Mammary epithelial cell (primary cell): ENCODE measurements at regions of chr16 and their contacts with region 1.

Region 1: DNA sequence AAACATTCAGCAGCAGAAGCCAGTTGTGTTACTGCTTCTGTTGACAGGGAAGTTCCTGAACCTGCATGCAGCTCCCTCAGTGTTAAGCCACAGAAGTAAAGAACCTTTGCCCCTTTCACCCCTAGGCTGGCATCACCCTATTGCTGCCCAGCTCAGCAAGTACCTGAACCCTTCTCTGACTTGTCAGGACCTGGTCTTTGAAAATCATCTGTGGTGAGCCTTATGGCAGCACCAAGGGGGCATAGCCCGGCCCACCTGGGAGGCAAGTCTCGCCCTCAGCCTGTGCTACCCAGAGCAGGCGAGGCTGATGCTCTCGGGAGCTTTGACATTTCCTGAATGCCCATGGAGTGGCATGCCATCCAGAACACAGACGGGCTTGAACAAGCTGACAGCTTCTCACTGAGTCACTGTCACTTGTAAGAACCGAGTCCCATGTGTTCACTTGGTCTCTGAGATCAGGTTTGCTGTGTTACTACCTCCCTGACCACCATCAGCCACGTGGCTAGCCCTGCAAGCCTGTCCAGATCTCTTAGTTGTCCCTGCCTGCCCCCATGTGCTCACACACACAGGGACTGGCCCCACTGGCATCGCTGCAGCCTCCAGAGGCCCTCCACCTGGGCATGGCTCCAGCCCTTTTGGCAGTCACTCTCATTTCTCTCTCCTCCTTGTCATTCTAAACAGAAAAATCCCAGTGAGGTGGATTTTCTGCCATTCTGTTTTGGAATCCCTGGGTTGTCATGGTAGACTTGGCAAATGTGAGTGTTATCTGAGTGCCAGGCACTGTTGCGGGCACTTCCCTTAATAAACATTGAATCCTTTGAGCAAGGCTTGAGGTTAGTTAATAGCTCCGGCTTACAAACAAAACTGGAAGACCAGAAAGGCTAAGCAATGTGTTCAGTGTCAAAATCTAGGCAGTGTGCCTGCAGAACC is 2.9 kb upstream of the CARMIL2 start:
- DNase-seq: peak; percentile 52
- H3K4me3 ChIP-seq: no peak overlapping the region
- H3K27ac ChIP-seq: no peak overlapping the region
- H3K4me1 ChIP-seq: peaks cover 12% of the 10 kb centered on the region
- H3K27me3 ChIP-seq: no peaks in the 10 kb centered on the region
- CTCF ChIP-seq: peak in 1 of 2 donors; percentile 10

Region 2: DNA sequence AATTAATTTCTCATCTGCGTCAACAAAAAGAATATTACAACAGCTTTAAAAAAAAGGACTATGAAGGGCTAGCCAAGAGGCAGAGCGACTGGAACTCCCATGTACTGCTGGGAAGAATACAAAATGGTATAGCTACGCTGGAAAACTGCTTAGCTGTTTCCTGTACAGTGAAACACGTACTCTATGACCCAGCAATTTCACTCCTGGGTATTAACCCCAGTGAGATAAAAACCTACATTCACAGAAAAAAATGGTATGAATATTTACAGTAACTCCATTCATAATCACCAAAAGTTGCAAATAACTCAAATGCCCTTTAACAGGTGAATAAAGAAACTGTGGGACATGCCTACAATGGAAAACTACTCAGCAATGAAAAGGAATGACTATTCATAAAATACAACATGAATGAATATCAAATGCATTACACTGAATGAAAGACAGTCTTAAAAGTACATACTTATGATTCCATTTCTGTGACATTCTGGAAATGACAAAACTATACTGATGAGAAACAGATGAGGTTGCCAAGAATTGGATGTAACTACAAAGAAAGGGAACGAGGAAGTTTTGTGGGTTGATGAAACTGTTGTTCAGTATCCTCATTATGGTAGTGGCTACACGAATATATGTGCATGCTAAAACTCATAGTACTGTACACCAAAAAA is 973.1 kb before region 1 on chr16:
- CTCF ChIA-PET with region 1: no interaction called
- dilution Hi-C with region 1: no loop called
- in situ Hi-C with region 1: no loop called
- intact Hi-C with region 1: no loop called
- DNase-seq: no peak
- H3K4me3 ChIP-seq: no peak overlapping the region
- H3K27ac ChIP-seq: no peak overlapping the region
- H3K4me1 ChIP-seq: no peaks in the 10 kb centered on the region
- H3K27me3 ChIP-seq: no peaks in the 10 kb centered on the region
- CTCF ChIP-seq: no peak

Region 3: GRCh38 chr16:67546761-67547422 is 95.2 kb before region 1 on chr16:
- CTCF ChIA-PET with region 1: interaction called, 3 read pairs
- dilution Hi-C with region 1: no loop called
- in situ Hi-C with region 1: no loop called
- intact Hi-C with region 1: loop called (anchors 1 kb)
- DNase-seq: peak; percentile 45
- H3K4me3 ChIP-seq: no peak overlapping the region
- H3K27ac ChIP-seq: no peak overlapping the region
- H3K4me1 ChIP-seq: peaks cover 26% of the 10 kb centered on the region
- H3K27me3 ChIP-seq: no peaks in the 10 kb centered on the region
- CTCF ChIP-seq: peak; percentile 93 to 94

Region 4: DNA sequence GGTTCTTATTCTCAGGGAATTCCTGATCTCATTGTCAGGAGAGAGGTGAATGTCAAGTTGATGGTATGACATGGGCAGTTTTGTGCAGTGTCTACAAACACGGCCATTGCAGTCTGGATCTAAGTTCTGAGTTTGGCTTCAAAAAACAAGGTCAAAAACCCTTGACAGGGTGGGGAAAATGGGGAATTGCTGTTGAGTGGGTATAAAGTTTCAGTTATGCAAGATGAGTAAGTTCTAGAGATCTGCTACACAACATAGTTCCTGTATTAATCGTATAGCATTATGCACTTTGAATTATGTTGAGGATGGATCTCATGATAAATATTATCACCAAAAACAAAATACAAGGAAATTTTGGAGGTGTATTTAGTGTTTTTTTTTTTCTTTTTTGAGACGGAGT is 33.7 kb before region 1 on chr16:
- CTCF ChIA-PET with region 1: no interaction called
- dilution Hi-C with region 1: loop called (anchors 5 kb)
- in situ Hi-C with region 1: no loop called
- intact Hi-C with region 1: no loop called
- DNase-seq: no peak
- H3K4me3 ChIP-seq: no peak overlapping the region
- H3K27ac ChIP-seq: no peak overlapping the region
- H3K4me1 ChIP-seq: no peaks in the 10 kb centered on the region
- H3K27me3 ChIP-seq: no peaks in the 10 kb centered on the region
- CTCF ChIP-seq: no peak

Region 5: DNA sequence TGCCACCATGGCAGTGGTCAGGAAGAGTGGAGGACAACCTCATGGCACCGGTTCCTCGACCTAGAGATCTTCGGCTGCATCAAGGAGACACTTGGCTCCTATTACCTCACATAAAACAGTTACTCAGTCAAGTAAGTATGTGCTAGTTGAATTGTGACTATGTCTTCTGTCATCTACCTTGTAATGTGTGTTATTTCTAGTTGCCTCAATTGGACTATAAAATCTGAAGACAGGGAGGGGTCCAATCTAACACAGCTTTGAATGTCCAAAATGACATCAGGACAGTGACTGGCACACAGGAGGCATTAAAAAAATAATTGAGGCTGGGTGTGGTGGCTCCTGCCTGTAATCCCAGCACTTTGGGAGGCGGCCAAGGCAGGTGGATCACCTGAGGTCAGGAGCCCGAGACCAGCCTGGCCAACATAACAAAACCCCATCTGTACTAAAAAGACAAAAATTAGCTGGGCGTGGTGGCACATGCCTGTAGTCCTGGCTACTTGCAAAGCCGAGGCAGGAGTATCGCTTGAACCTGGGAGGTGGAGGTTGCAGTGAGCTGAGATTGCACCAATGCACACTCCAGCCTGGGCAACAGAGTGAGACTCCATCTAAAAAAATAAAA is 41.8 kb after region 1 on chr16:
- CTCF ChIA-PET with region 1: no interaction called
- dilution Hi-C with region 1: loop called (anchors 5 kb)
- in situ Hi-C with region 1: no loop called
- intact Hi-C with region 1: no loop called
- DNase-seq: no peak
- H3K4me3 ChIP-seq: no peak overlapping the region
- H3K27ac ChIP-seq: no peak overlapping the region
- H3K4me1 ChIP-seq: no peaks in the 10 kb centered on the region
- H3K27me3 ChIP-seq: no peaks in the 10 kb centered on the region
- CTCF ChIP-seq: no peak

Region 6: DNA sequence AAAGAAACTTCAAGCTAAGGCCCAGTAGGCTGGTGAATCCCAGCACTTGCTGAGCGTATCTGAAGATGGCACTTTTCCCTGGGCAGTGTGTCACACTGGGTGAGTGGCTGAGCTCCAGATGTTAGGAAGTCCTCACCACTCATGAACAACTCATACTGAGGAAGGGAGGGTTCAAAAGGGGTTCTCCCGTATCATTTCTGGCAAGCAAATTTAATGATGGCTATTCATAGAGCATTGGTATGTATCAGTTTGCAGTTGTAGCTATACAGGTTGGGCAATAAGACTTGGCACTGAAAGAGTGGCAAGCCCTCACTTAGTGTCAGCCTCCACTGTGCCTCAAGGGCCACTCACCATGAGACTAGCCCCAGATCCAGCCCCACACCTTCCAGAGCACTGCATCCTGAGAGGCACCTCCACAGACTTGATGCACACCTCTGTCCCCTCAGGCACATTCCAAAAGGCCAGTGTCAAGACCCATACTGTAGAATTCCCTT is 66.4 kb after region 1 on chr16:
- CTCF ChIA-PET with region 1: no interaction called
- dilution Hi-C with region 1: no loop called
- in situ Hi-C with region 1: no loop called
- intact Hi-C with region 1: no loop called
- DNase-seq: peak; percentile 29
- H3K4me3 ChIP-seq: no peak overlapping the region
- H3K27ac ChIP-seq: no peak overlapping the region
- H3K4me1 ChIP-seq: peaks cover 8% of the 10 kb centered on the region
- H3K27me3 ChIP-seq: no peaks in the 10 kb centered on the region
- CTCF ChIP-seq: no peak

Region 7: GRCh38 chr16:67917852-67918236 is 275.8 kb after region 1 on chr16:
- CTCF ChIA-PET with region 1: no interaction called
- dilution Hi-C with region 1: no loop called
- in situ Hi-C with region 1: no loop called
- intact Hi-C with region 1: no loop called
- DNase-seq: peak; percentile 83
- H3K4me3 ChIP-seq: no peak overlapping the region
- H3K27ac ChIP-seq: no peak overlapping the region
- H3K4me1 ChIP-seq: peaks cover 23% of the 10 kb centered on the region
- H3K27me3 ChIP-seq: no peaks in the 10 kb centered on the region
- CTCF ChIP-seq: no peak